Dorsolateral prefrontal cortex (tissue), 120 donors: ENCODE measurements at regions of chrX and their contacts with region 1.

Region 1: GRCh38 chrX:129925305-129926092 is 19.5 kb downstream of the UTP14A start:
- DNase-seq: peak; percentile 43 to 81 (median 70)
- H3K4me3 ChIP-seq: no peak overlapping the region
- H3K27ac ChIP-seq: peak overlapping the region in 3 of 59 donors; percentile 5 to 12 (median 6)
- H3K27me3 ChIP-seq: peaks cover 0 to 30% (median 0%) of the 10 kb centered on the region in 45 donors
- CTCF ChIP-seq: peak; percentile 24 to 83 (median 70)

Region 2: GRCh38 chrX:129606918-129607317 is 318.6 kb before region 1 on chrX:
- intact Hi-C with region 1: loop called in 1 of 2 experiments (anchors 10 kb)
- DNase-seq: peak in 5 of 10 donors; percentile 41 to 58 (median 54)
- H3K4me3 ChIP-seq: no peak overlapping the region
- H3K27ac ChIP-seq: no peak overlapping the region
- H3K27me3 ChIP-seq: peaks cover 0 to 72% (median 14%) of the 10 kb centered on the region in 45 donors
- CTCF ChIP-seq: peak; percentile 29 to 92 (median 83)

Region 3: DNA sequence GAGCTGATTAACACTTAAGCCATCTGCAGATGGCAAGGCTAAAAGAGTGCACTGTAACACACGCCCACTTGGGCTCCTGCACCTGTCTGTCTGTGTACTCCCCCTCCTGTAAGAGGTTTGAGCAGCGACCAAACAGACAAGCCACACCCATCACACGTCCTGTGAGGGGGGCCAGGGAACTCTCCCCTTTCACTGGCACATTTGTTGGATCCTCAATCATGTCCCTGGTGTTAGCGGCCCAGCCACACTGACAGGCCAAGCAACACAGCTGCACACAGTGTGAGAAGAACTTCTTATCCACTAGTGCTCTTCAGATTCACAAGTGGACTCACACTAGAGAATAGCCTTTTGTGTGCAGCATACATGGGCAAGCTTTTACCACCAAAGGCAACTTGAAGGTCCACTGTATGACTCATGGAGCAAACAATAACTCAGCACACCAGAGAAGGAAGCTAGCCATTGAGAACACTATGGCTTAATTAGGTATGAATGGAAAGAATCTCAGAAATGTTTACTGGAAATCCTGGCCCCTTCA is 48.7 kb before region 1 on chrX:
- intact Hi-C with region 1: no loop called
- DNase-seq: no peak
- H3K4me3 ChIP-seq: no peak overlapping the region
- H3K27ac ChIP-seq: no peak overlapping the region
- H3K27me3 ChIP-seq: peaks cover 0 to 88% (median 8%) of the 10 kb centered on the region in 45 donors
- CTCF ChIP-seq: no peak

Region 4: GRCh38 chrX:130028196-130028595 is 102.7 kb after region 1 on chrX:
- intact Hi-C with region 1: loop called in 1 of 2 experiments (anchors 5 kb)
- DNase-seq: peak in 3 of 10 donors; percentile 31 to 43 (median 38)
- H3K4me3 ChIP-seq: no peak overlapping the region
- H3K27ac ChIP-seq: no peak overlapping the region
- H3K27me3 ChIP-seq: peaks cover 0 to 55% (median 9%) of the 10 kb centered on the region in 45 donors
- CTCF ChIP-seq: peak in 54 of 56 donors; percentile 44 to 75 (median 63)

Region 5: DNA sequence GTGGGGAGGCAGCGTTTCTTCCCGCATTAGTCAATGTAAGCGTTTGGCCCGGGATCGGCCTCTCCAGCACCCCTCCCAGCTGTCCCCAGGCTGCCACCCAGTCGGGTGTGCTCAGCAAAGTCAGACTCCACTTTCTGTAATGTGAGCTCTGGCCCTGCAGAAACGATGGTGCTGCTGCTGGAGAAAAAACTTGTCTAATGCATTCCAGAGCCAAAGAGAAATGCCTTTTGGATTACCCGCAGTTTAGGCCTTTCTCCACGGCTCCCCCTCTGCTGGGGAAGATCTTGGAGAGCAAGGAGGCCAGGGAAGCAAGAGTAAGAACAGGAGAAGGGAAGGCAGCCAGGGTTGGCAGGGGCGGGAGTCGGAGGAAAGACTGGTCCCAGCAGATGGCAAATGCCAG is 129.6 kb after region 1 on chrX:
- intact Hi-C with region 1: loop called (anchors 2 to 5 kb)
- DNase-seq: no peak
- H3K4me3 ChIP-seq: no peak overlapping the region
- H3K27ac ChIP-seq: no peak overlapping the region
- H3K27me3 ChIP-seq: peaks cover 0 to 53% (median 3%) of the 10 kb centered on the region in 45 donors
- CTCF ChIP-seq: no peak

Region 6: DNA sequence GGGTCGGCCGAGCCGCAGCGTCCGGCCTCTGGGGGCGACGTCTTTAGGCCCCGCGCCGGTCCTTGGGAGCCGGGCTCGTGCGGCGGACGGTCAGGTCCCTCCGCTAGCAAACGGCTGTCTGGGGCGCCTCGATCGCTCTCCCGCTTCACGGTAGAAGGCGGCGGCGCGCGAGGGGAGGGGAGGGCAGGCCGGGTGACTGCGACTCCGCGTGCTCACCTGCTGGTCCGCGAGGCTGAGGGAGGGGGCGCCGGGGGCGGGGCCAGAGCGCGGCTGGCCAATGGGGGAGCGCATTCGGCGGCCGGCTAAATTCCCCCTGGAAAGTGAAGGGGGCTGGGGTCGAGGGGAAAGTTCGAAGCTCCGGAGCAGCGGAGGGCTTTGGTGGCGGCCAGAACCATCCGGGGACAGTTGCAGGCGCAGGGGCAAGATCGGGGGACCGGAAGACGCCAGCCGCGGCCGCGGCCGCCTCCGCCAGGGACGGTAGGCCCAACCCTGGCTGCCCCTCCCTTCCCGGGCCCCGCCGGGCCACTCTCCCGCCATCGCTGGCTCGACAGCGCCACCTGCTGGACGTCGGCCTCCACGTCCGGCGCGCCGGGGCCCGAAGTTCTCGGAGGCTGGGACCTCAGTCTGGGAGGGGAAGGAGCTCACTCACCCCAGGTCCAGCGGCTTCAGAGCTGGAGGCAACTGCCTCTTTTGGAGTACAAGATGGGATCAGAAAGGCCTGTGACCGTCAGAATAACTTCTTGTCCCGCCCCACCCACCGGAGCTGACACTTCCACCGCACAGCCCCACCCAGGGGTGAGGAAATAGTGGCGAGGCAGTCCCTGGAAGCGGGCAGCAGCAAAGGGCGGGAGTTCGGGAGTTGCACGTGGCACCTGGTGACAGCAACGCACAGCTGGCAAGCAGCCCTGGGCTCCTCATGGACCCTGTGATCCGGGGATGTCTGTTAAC is 134.9 kb after region 1 on chrX:
- intact Hi-C with region 1: loop called (anchors 2 to 5 kb)
- DNase-seq: peak; percentile 48 to 88 (median 64)
- H3K4me3 ChIP-seq: peak overlapping the region; percentile 24 to 68 (median 57)
- H3K27ac ChIP-seq: peak overlapping the region in 16 of 59 donors; percentile 4 to 68 (median 40)
- H3K27me3 ChIP-seq: peaks cover 0 to 49% (median 8%) of the 10 kb centered on the region in 45 donors
- CTCF ChIP-seq: peak; percentile 69 to 96 (median 88)

Region 7: GRCh38 chrX:130426531-130426930 is 501.0 kb after region 1 on chrX:
- intact Hi-C with region 1: no loop called
- DNase-seq: no peak
- H3K4me3 ChIP-seq: no peak overlapping the region
- H3K27ac ChIP-seq: no peak overlapping the region
- H3K27me3 ChIP-seq: peaks cover 0 to 42% (median 8%) of the 10 kb centered on the region in 45 donors
- CTCF ChIP-seq: no peak